AG04449 (cell line): ENCODE measurements at regions of chr9 and their contacts with region 1.

Region 1: DNA sequence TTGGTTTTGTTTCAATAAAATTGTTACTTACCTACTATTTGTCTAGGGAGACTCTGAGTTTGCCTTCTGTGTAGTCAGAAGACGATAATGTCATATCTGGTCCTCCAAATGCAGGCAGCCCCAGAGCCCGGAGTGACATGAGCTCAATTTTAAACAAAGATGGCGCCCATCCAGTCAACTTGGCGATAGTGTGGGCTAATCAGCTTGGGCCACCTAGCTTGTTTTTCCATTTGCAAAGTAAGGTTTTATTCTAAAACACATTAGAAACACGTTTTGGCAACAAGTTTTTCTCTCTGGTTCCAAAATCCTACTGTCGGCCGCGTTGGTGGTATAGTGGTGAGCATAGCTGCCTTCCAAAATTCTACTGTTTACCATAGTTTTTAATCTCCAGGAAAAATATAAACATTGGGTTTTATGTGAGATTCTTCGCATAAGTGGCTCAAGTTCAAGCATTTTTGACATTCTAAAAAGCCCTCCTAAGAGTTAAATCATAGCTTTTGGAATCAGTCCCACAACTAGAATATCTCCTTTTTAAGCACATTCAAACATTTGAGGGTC is 13.2 kb downstream of the TSC1 start:
- DNase-seq: no peak
- H3K4me3 ChIP-seq: no peak overlapping the region
- CTCF ChIP-seq: no peak

Region 2: DNA sequence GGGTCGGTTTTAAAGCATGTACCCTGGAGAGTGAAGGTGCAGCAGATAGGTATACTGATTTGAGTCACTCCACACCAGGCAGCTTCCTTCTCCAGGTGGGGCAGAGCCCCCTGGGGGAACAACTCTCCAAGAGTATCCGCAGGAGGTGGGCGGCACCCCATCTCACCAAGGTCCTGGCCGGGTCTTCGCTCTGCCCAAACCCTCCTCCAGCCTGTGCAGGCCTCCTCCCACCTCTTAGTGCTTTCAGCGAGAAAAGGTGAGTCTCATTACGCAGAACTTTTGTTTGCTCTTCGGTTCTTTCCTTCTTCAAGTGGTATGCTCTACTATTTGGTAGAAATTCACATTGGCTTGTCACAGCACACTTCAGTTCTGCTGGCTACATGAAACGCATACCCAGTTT is 38.9 kb before region 1 on chr9:
- CTCF ChIA-PET with region 1: no interaction called
- POLR2A ChIA-PET with region 1: no interaction called
- DNase-seq: no peak
- H3K4me3 ChIP-seq: no peak overlapping the region
- CTCF ChIP-seq: no peak

Region 3: GRCh38 chr9:132944302-132945185 is 13.3 kb after region 1 on chr9 and contains the start of gene TSC1:
- CTCF ChIA-PET with region 1: interaction called, 7 read pairs
- POLR2A ChIA-PET with region 1: interaction called, 12 read pairs
- DNase-seq: peak; percentile 76
- H3K4me3 ChIP-seq: peak within 1 kb of the TSS; percentile 95
- CTCF ChIP-seq: no peak